Caco-2 (cell line): ENCODE measurements at regions of chr6 and their contacts with region 1.

Region 1: GRCh38 chr6:188821-189655 is 103.2 kb upstream of the DUSP22 start:
- DNase-seq: peak; percentile 86 to 90
- H3K4me3 ChIP-seq: no peak overlapping the region
- H3K4me3 Mint-ChIP-seq: no peak overlapping the region
- H3K27ac Mint-ChIP-seq: no peak overlapping the region
- H3K4me1 ChIP-seq: no peaks in the 10 kb centered on the region
- H3K4me1 Mint-ChIP-seq: peaks cover 8% of the 10 kb centered on the region
- H3K27me3 ChIP-seq: no peaks in the 10 kb centered on the region; the same call in 1 of the 2 replicates
- H3K27me3 Mint-ChIP-seq: no peaks in the 10 kb centered on the region
- CTCF ChIP-seq: peak; percentile 87 to 94

Region 2: GRCh38 chr6:174036-174435 is 15.0 kb before region 1 on chr6:
- CTCF ChIA-PET with region 1: no interaction called
- POLR2A ChIA-PET with region 1: no interaction called
- intact Hi-C with region 1: no loop called
- DNase-seq: no peak
- H3K4me3 ChIP-seq: no peak overlapping the region
- H3K4me3 Mint-ChIP-seq: no peak overlapping the region
- H3K27ac Mint-ChIP-seq: no peak overlapping the region
- H3K4me1 ChIP-seq: no peaks in the 10 kb centered on the region
- H3K4me1 Mint-ChIP-seq: no peaks in the 10 kb centered on the region
- H3K27me3 ChIP-seq: no peaks in the 10 kb centered on the region
- H3K27me3 Mint-ChIP-seq: peaks cover 15% of the 10 kb centered on the region
- CTCF ChIP-seq: no peak

Region 3: GRCh38 chr6:579339-579738 is 390.3 kb after region 1 on chr6:
- CTCF ChIA-PET with region 1: no interaction called
- POLR2A ChIA-PET with region 1: no interaction called
- intact Hi-C with region 1: loop called (anchors 5 kb)
- DNase-seq: peak in 1 of 2 experiments; percentile 9
- H3K4me3 ChIP-seq: no peak overlapping the region
- H3K4me3 Mint-ChIP-seq: no peak overlapping the region
- H3K27ac Mint-ChIP-seq: no peak overlapping the region
- H3K4me1 ChIP-seq: peaks cover 9% of the 10 kb centered on the region; the same call in 1 of the 2 replicates
- H3K4me1 Mint-ChIP-seq: peaks cover 6% of the 10 kb centered on the region
- H3K27me3 ChIP-seq: no peaks in the 10 kb centered on the region
- H3K27me3 Mint-ChIP-seq: no peaks in the 10 kb centered on the region
- CTCF ChIP-seq: peak; percentile 33 to 34